Tibial artery (tissue), 4 donors: ENCODE measurements at regions of chr9 and their contacts with region 1.

Region 1: GRCh38 chr9:110048403-110048975 is 159.5 kb downstream of the C9orf152 start:
- DNase-seq: peak; percentile 80 to 89
- H3K4me3 ChIP-seq: peak overlapping the region; percentile 79 to 82
- H3K27ac ChIP-seq: peak overlapping the region; percentile 70 to 79
- H3K4me1 ChIP-seq: peaks cover 4 to 37% (median 20%) of the 10 kb centered on the region in 4 donors
- H3K27me3 ChIP-seq: no peaks in the 10 kb centered on the region
- CTCF ChIP-seq: no peak

Region 2: GRCh38 chr9:109903515-109904138 is 144.9 kb before region 1 on chr9:
- intact Hi-C with region 1: no loop called
- DNase-seq: peak; percentile 64 to 70
- H3K4me3 ChIP-seq: no peak overlapping the region
- H3K27ac ChIP-seq: no peak overlapping the region
- H3K4me1 ChIP-seq: peaks cover 0 to 5% (median 0%) of the 10 kb centered on the region in 4 donors
- H3K27me3 ChIP-seq: no peaks in the 10 kb centered on the region
- CTCF ChIP-seq: peak; percentile 76 to 79

Region 3: GRCh38 chr9:110133608-110134210 is 85.2 kb after region 1 on chr9:
- intact Hi-C with region 1: loop called (anchors 10 kb)
- DNase-seq: no peak
- H3K4me3 ChIP-seq: no peak overlapping the region
- H3K27ac ChIP-seq: no peak overlapping the region
- H3K4me1 ChIP-seq: peaks cover 0 to 68% (median 41%) of the 10 kb centered on the region in 4 donors
- H3K27me3 ChIP-seq: no peaks in the 10 kb centered on the region
- CTCF ChIP-seq: no peak